ENCODE measurements at regions of chr5 and their contacts with region 1.

Region 1: GRCh38 chr5:150801117-150801927 is 22.8 kb downstream of the SMIM3 start:
- DNase-seq: peak; percentile 41
- H3K4me3 ChIP-seq: peak overlapping the region; percentile 21 to 22
- H3K27ac ChIP-seq: peak overlapping the region; percentile 52 to 67
- H3K4me1 ChIP-seq: no peaks in the 10 kb centered on the region
- H3K27me3 ChIP-seq: no peaks in the 10 kb centered on the region
- CTCF ChIP-seq: peak; percentile 30 to 78 (median 58)
- POLR2A ChIP-seq: no peak

Region 2: GRCh38 chr5:150846654-150847333 is 45.5 kb after region 1 on chr5:
- intact Hi-C with region 1: loop called (anchors 5 kb)
- DNase-seq: peak; percentile 76
- H3K4me3 ChIP-seq: no peak overlapping the region
- H3K27ac ChIP-seq: no peak overlapping the region
- H3K4me1 ChIP-seq: no peaks in the 10 kb centered on the region
- H3K27me3 ChIP-seq: no peaks in the 10 kb centered on the region
- CTCF ChIP-seq: peak; percentile 13 to 85 (median 69)
- POLR2A ChIP-seq: no peak

Region 3: DNA sequence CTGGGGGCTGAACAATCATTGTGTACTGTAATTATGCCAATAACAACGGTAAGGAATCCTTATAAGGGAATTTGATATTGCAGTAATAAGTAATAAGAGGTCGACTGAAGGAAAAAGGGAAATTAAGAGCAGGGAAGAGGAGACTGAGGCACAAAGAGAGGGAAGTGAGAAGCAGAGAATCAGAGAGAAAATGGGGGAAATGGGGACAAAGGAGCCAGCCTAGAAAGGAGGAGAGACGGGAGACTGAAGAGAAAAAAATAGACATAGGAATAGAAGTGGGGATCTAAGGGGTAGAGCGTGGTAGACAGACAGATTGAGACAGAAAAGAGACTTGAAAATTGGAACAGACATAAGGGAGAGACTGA is 104.0 kb after region 1 on chr5:
- intact Hi-C with region 1: no loop called
- DNase-seq: no peak
- H3K4me3 ChIP-seq: peak overlapping the region; percentile 40 to 44
- H3K27ac ChIP-seq: peak overlapping the region; percentile 48 to 63
- H3K4me1 ChIP-seq: no peaks in the 10 kb centered on the region
- H3K27me3 ChIP-seq: no peaks in the 10 kb centered on the region
- CTCF ChIP-seq: no peak
- POLR2A ChIP-seq: no peak

Measured in prostate gland (tissue), 2 donors.